Activated CD4-positive, alpha-beta T cell treated with anti-CD3 and anti-CD28 coated beads for 36 hours (primary cell): ENCODE measurements at regions of chr7 and their contacts with region 1.

Region 1: DNA sequence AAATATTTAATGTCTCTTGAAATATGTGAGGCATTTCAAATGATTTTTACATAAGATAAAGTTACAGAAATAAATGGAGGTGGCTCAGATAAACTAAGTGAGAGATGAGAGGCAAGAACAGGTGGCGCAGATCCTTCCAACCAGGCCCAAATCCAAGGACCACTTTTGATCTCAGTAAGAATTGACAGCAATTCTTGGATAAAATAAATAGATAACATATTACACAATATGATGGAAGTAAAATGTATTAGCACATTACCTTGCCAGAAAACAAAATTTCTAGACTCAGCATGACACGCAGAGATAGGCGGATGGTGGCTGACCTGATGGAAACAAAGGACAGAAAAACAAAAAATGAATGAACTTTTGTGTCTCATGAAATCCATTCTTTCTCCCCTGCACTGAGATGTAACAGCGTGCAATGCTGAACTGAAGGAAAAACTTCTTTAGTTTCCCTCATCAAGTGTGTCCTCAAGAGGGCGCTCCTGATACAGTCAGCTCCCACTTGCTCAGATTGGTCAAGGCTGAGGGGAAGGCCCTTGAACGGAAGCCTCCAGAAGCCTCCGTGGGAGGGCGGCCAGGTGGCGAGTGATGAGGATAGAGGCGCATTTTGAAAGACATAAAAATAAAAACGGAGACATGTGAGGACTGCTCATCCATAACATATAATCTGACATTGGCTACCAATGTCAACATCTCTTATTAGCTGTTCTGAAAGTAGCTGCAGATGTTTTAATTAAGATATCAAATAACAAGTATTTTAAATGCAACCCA is 62.8 kb upstream of the GSDME start:
- DNase-seq: peak; percentile 87
- ATAC-seq: peak; percentile 40
- H3K4me3 Mint-ChIP-seq: peak overlapping the region; percentile 64
- H3K27ac Mint-ChIP-seq: peak overlapping the region; percentile 100
- H3K4me1 Mint-ChIP-seq: peaks cover 43% of the 10 kb centered on the region
- H3K27me3 Mint-ChIP-seq: no peaks in the 10 kb centered on the region

Region 2: GRCh38 chr7:24545215-24545614 is 274.9 kb before region 1 on chr7:
- CTCF ChIA-PET with region 1: no interaction called
- POLR2A ChIA-PET with region 1: no interaction called
- intact Hi-C with region 1: no loop called
- DNase-seq: no peak
- ATAC-seq: no peak
- H3K4me3 Mint-ChIP-seq: no peak overlapping the region
- H3K27ac Mint-ChIP-seq: no peak overlapping the region
- H3K4me1 Mint-ChIP-seq: no peaks in the 10 kb centered on the region
- H3K27me3 Mint-ChIP-seq: peaks cover 6% of the 10 kb centered on the region

Region 3: DNA sequence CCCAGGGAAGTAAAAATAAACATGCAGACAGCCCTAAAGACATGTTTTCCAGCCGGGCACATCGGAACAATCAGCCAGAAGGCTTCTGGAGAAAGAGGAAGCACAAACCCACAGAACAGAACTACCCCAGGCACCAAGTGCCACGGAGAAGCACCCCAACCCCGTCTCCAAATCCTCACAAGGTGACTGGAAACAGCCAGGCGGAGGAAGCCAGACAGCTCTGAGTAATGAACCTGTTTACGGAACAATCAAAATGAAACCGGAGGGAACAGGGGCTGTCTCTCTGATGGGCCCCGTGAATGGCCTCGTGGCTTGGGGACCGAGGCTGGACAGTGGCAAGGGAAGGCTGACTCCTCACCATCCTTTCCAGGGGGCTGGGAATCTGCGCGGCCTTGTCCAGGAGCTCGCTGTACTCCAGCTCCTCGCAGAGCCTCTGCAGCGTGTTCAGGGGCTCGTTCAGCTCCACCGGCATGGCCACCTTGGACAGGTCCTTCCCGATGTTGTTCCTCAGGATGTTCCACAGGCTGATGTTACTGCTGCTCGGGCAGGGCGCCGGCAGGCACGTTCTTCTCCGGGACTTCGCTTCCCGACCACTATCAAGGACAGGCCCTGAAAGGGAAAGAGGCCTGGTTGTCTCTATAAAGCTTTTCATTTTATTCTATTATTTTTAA is 14.2 kb after region 1 on chr7:
- CTCF ChIA-PET with region 1: interaction called, 11 read pairs
- POLR2A ChIA-PET with region 1: no interaction called
- intact Hi-C with region 1: no loop called
- DNase-seq: peak; percentile 18
- ATAC-seq: no peak
- H3K4me3 Mint-ChIP-seq: no peak overlapping the region
- H3K27ac Mint-ChIP-seq: no peak overlapping the region
- H3K4me1 Mint-ChIP-seq: peaks cover 43% of the 10 kb centered on the region
- H3K27me3 Mint-ChIP-seq: no peaks in the 10 kb centered on the region

Region 4: DNA sequence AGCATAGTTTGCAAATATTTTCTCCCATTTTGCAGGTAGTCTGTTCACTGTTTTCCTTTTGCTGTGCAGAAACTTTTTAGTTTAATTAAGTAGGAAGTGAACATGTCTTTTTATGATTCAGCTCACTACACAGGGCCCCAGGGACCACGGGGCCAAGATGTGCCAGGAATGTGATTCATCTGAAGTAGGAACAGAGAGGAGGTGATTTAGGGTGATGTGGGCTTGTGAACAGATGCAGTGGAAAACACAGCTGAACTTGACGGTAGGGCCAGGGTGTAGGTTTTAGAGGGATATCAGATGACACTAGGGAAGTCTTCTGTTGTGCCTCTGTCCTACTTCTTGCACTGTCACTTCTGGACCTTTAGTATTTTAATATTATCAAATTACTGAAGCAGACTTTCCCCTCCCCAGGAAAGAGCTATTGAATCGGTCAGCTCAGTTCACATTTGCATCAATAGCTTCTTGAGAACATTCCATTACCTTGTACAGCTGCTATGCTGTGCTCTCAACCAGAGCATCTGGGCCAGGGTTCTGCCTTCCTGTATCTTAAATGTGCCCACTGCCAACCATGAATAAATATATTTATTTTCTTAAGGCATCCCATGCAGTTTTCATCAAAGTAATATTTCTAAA is 63.0 kb after region 1 on chr7:
- CTCF ChIA-PET with region 1: interaction called, 18 read pairs
- POLR2A ChIA-PET with region 1: no interaction called
- intact Hi-C with region 1: loop called (anchors 2 kb)
- DNase-seq: peak; percentile 74
- ATAC-seq: peak; percentile 87
- H3K4me3 Mint-ChIP-seq: no peak overlapping the region
- H3K27ac Mint-ChIP-seq: peak overlapping the region; percentile 66
- H3K4me1 Mint-ChIP-seq: peaks cover 74% of the 10 kb centered on the region
- H3K27me3 Mint-ChIP-seq: no peaks in the 10 kb centered on the region

Region 5: GRCh38 chr7:24979863-24980533 is 159.9 kb after region 1 on chr7 and contains the start of gene OSBPL3:
- CTCF ChIA-PET with region 1: interaction called, 57 read pairs
- POLR2A ChIA-PET with region 1: interaction called, 5 read pairs
- intact Hi-C with region 1: loop called (anchors 1 kb)
- DNase-seq: peak; percentile 96
- ATAC-seq: peak; percentile 84
- H3K4me3 Mint-ChIP-seq: peak within 1 kb of the TSS; percentile 90
- H3K27ac Mint-ChIP-seq: peak within 1 kb of the TSS; percentile 93
- H3K4me1 Mint-ChIP-seq: peaks cover 53% of the 10 kb centered on the region
- H3K27me3 Mint-ChIP-seq: no peaks in the 10 kb centered on the region
- total RNA-seq, gene OSBPL3: 34.7 to 38.2 TPM

Region 6: DNA sequence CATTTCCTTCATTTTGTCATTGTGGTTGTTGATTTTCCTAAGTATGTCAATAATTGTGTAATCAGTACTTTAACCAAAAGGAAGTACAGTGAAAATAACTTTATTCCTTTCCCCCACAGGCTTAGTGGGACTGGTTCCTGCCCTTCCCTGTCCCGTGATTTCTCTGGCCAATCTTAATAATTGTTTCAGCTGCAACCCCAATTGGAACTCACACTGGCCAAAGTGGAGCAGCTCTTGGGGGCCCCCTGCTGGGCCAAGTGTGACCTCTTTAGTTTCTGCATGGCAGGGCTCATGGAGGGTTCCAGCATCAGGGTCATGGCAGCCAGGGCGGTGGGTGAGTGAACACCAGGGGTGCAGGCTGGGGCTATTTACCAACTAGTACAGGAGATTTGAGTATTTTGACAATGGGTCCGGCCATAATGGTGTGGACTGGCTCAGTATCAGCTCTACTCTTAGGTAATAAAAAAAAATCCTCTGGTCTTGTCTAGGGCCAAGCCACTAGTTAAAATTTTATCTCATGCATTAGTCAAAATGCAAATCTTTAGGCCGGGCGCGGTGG is 273.2 kb after region 1 on chr7:
- CTCF ChIA-PET with region 1: interaction called, 152 read pairs
- POLR2A ChIA-PET with region 1: no interaction called
- intact Hi-C with region 1: loop called (anchors 1 to 2 kb)
- DNase-seq: peak; percentile 90
- ATAC-seq: peak; percentile 91
- H3K4me3 Mint-ChIP-seq: no peak overlapping the region
- H3K27ac Mint-ChIP-seq: no peak overlapping the region
- H3K4me1 Mint-ChIP-seq: peaks cover 12% of the 10 kb centered on the region
- H3K27me3 Mint-ChIP-seq: peaks cover 2% of the 10 kb centered on the region

Region 7: GRCh38 chr7:25125137-25125946 is 305.2 kb after region 1 on chr7 and contains the start of gene CYCS:
- CTCF ChIA-PET with region 1: interaction called, 4 read pairs
- POLR2A ChIA-PET with region 1: interaction called, 6 read pairs
- intact Hi-C with region 1: loop called in 1 of 2 experiments (anchors 1 kb)
- DNase-seq: peak; percentile 100
- ATAC-seq: peak; percentile 97
- H3K4me3 Mint-ChIP-seq: peak within 1 kb of the TSS; percentile 97
- H3K27ac Mint-ChIP-seq: peak within 1 kb of the TSS; percentile 98
- H3K4me1 Mint-ChIP-seq: peaks cover 27% of the 10 kb centered on the region
- H3K27me3 Mint-ChIP-seq: no peaks in the 10 kb centered on the region
- total RNA-seq, gene CYCS: 222 to 237 TPM